ENCODE measurements at regions of chr2 and their contacts with region 1.

Region 1: GRCh38 chr2:191165176-191165643 is 14.4 kb upstream of the STAT4 start:
- DNase-seq: no peak
- H3K4me3 ChIP-seq: no peak overlapping the region
- H3K27ac ChIP-seq: no peak overlapping the region
- H3K4me1 ChIP-seq: peaks cover 0 to 13% (median 5%) of the 10 kb centered on the region in 6 donors
- H3K27me3 ChIP-seq: no peaks in the 10 kb centered on the region
- CTCF ChIP-seq: peak; percentile 27 to 75 (median 57)
- POLR2A ChIP-seq: no peak

Region 2: GRCh38 chr2:191521608-191522208 is 356.5 kb after region 1 on chr2:
- intact Hi-C with region 1: loop called (anchors 2 kb)
- DNase-seq: no peak
- H3K4me3 ChIP-seq: no peak overlapping the region
- H3K27ac ChIP-seq: no peak overlapping the region
- H3K4me1 ChIP-seq: no peaks in the 10 kb centered on the region
- H3K27me3 ChIP-seq: peaks cover 0 to 8% (median 0%) of the 10 kb centered on the region in 7 donors
- CTCF ChIP-seq: peak; percentile 39 to 75 (median 66)
- POLR2A ChIP-seq: no peak

Measured in spleen (tissue), 13 donors.